ENCODE measurements at regions of chr2 and their contacts with region 1.

Region 1: GRCh38 chr2:23199115-23199918 is 185.7 kb upstream of the KLHL29 start:
- DNase-seq: no peak
- H3K4me3 ChIP-seq: no peak overlapping the region
- H3K27ac ChIP-seq: no peak overlapping the region
- H3K4me1 ChIP-seq: no peaks in the 10 kb centered on the region
- H3K27me3 ChIP-seq: no peaks in the 10 kb centered on the region
- CTCF ChIP-seq: peak; percentile 28 to 30
- POLR2A ChIP-seq: no peak

Region 2: DNA sequence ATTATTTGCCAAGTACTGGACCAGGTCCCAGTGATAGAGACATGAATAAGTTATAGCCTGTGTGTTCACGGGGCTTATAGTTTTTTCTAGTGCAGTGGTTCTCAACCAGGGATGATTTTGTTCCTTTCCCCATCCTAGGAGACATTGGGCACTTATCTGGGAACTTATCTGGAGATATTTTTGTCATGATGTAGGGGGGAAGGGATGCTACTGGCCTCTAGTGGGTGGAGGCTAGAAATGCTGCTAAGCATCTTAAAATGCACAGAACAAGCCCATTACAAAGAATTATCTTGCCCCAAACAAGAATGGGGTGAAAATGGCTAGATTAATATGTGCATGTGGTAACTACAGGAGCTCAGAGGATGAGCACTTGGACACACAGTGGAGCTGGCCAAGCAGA is 260.9 kb after region 1 on chr2:
- CTCF ChIA-PET with region 1: no interaction called
- POLR2A ChIA-PET with region 1: no interaction called
- dilution Hi-C with region 1: no loop called
- intact Hi-C with region 1: loop called (anchors 2 kb)
- DNase-seq: peak; percentile 18
- H3K4me3 ChIP-seq: no peak overlapping the region
- H3K27ac ChIP-seq: no peak overlapping the region
- H3K4me1 ChIP-seq: no peaks in the 10 kb centered on the region
- H3K27me3 ChIP-seq: no peaks in the 10 kb centered on the region
- CTCF ChIP-seq: peak; percentile 36 to 53
- POLR2A ChIP-seq: no peak

Region 3: DNA sequence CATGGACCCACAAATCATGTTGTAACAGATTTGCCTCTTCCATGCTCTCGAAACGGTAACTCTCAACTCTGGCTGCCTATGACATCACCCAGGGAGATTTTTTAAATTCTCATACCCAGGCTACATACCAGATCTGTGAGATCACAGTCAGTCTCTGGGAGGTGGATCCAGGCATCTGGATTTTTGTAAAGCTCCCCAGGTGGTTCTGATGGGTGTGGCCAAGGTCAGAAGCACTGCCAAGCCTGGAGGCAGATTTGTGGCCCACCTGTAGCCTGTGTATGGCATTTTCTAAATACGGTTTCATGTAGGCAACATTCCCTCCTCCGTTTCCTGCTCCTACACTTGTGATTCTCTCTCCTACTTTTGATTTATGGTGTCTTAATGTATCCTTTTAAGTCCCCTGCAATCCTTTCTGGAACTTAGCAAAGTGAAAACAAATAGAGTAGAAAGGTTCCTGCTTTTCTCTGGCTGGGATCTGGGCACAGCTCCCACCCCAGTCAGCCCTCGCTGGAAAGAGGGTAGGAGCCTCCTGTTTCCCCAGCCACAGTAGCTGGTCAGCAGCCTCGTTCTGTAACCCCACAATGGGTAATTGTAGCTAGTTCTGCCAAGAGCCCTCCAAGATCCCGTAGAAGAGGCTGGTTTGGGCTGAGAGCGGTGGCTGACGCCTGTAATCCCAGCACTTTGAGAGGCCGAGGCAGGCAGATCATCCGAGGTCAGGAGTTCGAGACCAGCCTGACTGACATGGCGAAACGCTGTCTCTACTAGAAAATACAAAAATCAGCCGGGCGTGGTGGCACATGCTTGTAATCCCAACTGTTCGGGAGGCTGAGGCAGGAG is 281.9 kb after region 1 on chr2:
- CTCF ChIA-PET with region 1: no interaction called
- POLR2A ChIA-PET with region 1: no interaction called
- dilution Hi-C with region 1: no loop called
- intact Hi-C with region 1: no loop called
- DNase-seq: no peak
- H3K4me3 ChIP-seq: no peak overlapping the region
- H3K27ac ChIP-seq: no peak overlapping the region
- H3K4me1 ChIP-seq: no peaks in the 10 kb centered on the region
- H3K27me3 ChIP-seq: no peaks in the 10 kb centered on the region
- CTCF ChIP-seq: no peak
- POLR2A ChIP-seq: no peak

Measured in endothelial cell of umbilical vein (primary cell).